ENCODE measurements at regions of chr10 and their contacts with region 1.

Region 1: GRCh38 chr10:122374237-122374869 is at the start of gene PLEKHA1:
- DNase-seq: peak; percentile 93
- H3K4me3 Mint-ChIP-seq: peak within 1 kb of the TSS; percentile 90
- H3K27ac Mint-ChIP-seq: peak within 1 kb of the TSS; percentile 94
- H3K4me1 Mint-ChIP-seq: peaks cover 37% of the 10 kb centered on the region
- H3K27me3 Mint-ChIP-seq: no peaks in the 10 kb centered on the region
- total RNA-seq, gene PLEKHA1: 17.6 to 17.9 TPM

Region 2: GRCh38 chr10:121974535-121975294 is 399.6 kb before region 1 on chr10 and contains the start of gene NSMCE4A:
- CTCF ChIA-PET with region 1: no interaction called
- intact Hi-C with region 1: loop called (anchors 1 kb)
- DNase-seq: peak; percentile 76
- H3K4me3 Mint-ChIP-seq: peak within 1 kb of the TSS; percentile 76
- H3K27ac Mint-ChIP-seq: no peak within 1 kb of the TSS
- H3K4me1 Mint-ChIP-seq: peaks cover 24% of the 10 kb centered on the region
- H3K27me3 Mint-ChIP-seq: no peaks in the 10 kb centered on the region
- total RNA-seq, gene NSMCE4A: 47.5 to 48.8 TPM

Region 3: DNA sequence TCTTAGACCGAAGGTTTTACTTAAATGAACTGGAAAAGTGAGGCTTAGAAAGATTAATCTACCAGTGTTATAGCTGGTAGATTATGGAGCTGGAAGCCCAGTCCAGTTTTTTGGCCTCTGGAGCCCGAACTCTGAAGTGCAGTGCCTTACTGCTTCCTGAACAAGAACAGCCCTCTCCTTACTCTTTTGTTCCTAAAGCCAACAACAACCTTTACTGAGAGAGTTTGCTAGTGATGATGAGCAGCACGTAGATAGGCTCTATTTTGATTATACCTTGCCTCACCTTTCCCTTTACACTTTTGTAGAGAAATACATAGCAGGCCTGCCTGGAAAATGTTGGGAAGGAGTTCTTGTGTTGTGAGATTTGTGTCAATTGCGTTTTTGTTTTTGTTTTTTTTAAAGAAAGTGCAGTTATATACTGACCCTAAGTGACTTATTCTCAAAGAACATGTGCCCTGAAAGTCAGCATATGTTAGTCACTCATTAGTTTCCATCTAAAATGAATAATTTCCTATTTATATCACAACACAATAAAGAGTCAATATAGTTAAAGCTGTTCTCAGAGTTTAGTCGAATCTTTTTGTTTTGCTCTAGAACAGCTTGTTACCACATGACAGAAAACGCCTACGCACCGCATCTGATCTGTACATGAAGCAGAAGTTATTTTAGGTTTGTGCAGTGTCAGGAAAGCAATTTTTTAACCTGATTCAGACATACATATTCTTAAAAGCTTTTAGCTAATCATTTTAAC is 33.2 kb after region 1 on chr10:
- CTCF ChIA-PET with region 1: interaction called, 3 read pairs
- intact Hi-C with region 1: loop called (anchors 1 kb)
- DNase-seq: peak; percentile 88
- H3K4me3 Mint-ChIP-seq: peak overlapping the region; percentile 30
- H3K27ac Mint-ChIP-seq: peak overlapping the region; percentile 46
- H3K4me1 Mint-ChIP-seq: peaks cover 47% of the 10 kb centered on the region
- H3K27me3 Mint-ChIP-seq: no peaks in the 10 kb centered on the region

Region 4: GRCh38 chr10:122879339-122880273 is 505.3 kb after region 1 on chr10 and contains the start of gene FAM24B:
- CTCF ChIA-PET with region 1: no interaction called
- intact Hi-C with region 1: loop called (anchors 1 kb)
- DNase-seq: peak; percentile 95
- H3K4me3 Mint-ChIP-seq: peak within 1 kb of the TSS; percentile 82
- H3K27ac Mint-ChIP-seq: peak within 1 kb of the TSS; percentile 90
- H3K4me1 Mint-ChIP-seq: peaks cover 45% of the 10 kb centered on the region
- H3K27me3 Mint-ChIP-seq: peaks cover 3% of the 10 kb centered on the region
- total RNA-seq, gene FAM24B: 8.0 to 8.1 TPM

Region 5: GRCh38 chr10:122980209-122981065 is 606.1 kb after region 1 on chr10 and contains the start of gene PSTK:
- CTCF ChIA-PET with region 1: no interaction called
- intact Hi-C with region 1: loop called (anchors 1 kb)
- DNase-seq: peak; percentile 90
- H3K4me3 Mint-ChIP-seq: peak within 1 kb of the TSS; percentile 87
- H3K27ac Mint-ChIP-seq: peak within 1 kb of the TSS; percentile 92
- H3K4me1 Mint-ChIP-seq: peaks cover 17% of the 10 kb centered on the region
- H3K27me3 Mint-ChIP-seq: no peaks in the 10 kb centered on the region
- total RNA-seq, gene PSTK: 3.9 to 4.2 TPM

Measured in activated naive CD4-positive, alpha-beta T cell treated with anti-CD3 and anti-CD28 coated beads for 36 hours (primary cell).